ENCODE measurements at regions of chr10 and their contacts with region 1.

Region 1: DNA sequence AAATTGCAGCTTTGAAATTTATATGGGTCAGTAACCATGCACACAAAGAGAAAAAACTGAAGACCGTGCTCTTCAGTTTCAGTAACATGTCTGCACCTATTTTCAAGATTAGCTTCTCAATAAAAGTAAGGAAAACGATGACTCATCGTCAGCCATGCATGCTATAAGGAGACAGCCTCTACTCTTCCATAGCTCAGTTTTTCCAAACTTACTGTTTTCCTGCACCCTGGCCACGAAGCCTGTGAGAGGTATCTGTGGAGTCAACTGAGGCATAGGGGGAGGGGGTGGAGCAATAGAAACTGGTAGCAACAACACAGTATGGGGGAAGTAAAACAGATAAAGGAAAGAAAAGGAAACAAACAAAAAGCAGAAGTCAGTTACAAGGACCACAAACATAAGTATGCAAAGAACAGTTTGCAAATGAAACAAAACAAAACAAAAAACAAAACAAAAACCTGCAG is 58.0 kb downstream of the PDSS1 start:
- DNase-seq: peak; percentile 18
- H3K4me3 ChIP-seq: no peak overlapping the region
- CTCF ChIP-seq: no peak

Region 2: GRCh38 chr10:26534384-26534783 is 221.1 kb before region 1 on chr10:
- in situ Hi-C with region 1: no loop called
- DNase-seq: no peak
- H3K4me3 ChIP-seq: no peak overlapping the region
- CTCF ChIP-seq: no peak

Region 3: DNA sequence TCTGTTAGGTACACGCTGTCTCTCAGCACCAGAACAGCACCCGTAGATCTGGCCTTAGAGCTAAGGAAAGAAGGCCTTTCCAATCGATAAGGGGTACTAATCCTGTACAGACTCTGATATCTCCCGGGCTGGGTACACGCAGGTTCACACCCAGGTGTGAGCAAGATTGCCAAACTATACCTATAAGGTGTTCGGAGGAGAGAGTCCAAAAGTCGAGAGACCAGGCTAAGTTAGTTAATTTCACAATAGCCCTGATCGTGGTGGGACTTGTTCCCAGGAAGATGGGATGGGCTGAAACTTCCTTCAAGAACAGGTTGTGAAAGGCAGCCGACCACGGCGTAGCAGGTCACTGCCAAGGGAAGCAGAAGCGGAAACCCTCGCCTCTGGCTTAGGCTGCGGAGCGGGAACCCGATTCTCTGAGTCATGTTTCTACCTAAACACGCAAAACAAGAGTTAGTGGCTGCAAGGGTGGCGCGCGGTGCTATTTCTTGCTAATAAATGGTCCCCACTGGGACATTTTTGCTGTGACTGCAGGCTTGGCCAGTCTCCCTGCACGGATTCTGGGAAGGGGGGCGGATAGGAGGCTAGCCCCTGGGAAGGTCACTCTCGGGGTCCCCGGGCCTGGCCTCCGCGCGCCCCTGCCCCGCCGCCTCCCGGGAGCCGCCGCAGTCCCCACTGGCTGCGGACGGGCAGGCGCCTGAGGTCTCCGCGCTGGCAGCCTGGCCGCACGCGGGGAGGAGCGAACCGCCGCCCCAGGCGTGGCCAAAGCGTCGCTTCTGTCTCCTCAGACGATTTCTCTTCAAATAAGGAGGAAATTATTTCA is 133.4 kb before region 1 on chr10:
- in situ Hi-C with region 1: no loop called
- DNase-seq: no peak
- H3K4me3 ChIP-seq: peak overlapping the region; percentile 22
- CTCF ChIP-seq: no peak

Region 4: GRCh38 chr10:26721561-26721960 is 33.9 kb before region 1 on chr10:
- in situ Hi-C with region 1: no loop called
- DNase-seq: no peak
- H3K4me3 ChIP-seq: no peak overlapping the region
- CTCF ChIP-seq: no peak

Region 5: DNA sequence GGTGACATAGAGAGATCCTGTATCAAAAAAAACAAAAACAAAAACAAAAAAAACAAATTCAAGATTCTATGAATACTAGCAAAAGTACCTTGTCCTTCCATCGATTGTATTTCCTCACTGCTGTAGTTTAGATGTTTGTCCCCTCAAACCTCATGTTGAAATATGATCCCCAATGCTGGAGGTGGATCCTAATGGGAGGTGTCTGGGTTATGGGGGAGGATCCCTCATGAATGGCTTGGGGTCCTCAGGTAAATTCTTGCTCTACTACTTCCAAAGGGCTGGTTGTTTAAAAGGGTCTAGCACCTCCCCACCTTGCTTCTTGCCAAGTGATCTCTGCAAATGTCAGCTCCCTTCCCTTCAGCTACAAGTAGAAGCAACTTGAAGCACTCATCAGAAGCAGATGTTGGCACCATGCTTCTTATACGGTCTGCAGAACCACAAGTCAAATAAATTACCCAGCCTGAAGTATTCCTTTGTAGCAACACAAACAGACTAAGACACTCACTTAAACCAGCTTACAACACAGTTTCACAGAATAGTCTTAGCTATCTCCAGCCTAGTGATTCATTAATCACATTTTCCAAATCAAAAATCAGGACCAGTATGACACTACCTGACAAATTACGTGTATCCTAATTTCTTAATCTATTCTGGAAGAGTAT is 84.6 kb after region 1 on chr10:
- in situ Hi-C with region 1: loop called (anchors 5 kb)
- DNase-seq: peak; percentile 13
- H3K4me3 ChIP-seq: no peak overlapping the region
- CTCF ChIP-seq: no peak

Measured in astrocyte of the cerebellum (primary cell).